Activated CD8-positive, alpha-beta T cell treated with anti-CD3 and anti-CD28 coated beads, Interleukin-2, amount 10 ng/mL, durations not matched to agents 7 days and 5 days (primary cell): ENCODE measurements at regions of chr7 and their contacts with region 1.

Region 1: GRCh38 chr7:101804967-101805366 is 12.5 kb upstream of the CUX1 start:
- DNase-seq: peak; percentile 30
- ATAC-seq: peak; percentile 71
- H3K4me3 Mint-ChIP-seq: no peak overlapping the region
- H3K27ac Mint-ChIP-seq: no peak overlapping the region
- H3K4me1 Mint-ChIP-seq: peaks cover 15% of the 10 kb centered on the region
- H3K27me3 Mint-ChIP-seq: peaks cover 23% of the 10 kb centered on the region

Region 2: GRCh38 chr7:101792051-101792681 is 12.8 kb before region 1 on chr7:
- CTCF ChIA-PET with region 1: no interaction called
- POLR2A ChIA-PET with region 1: no interaction called
- DNase-seq: no peak
- ATAC-seq: no peak
- H3K4me3 Mint-ChIP-seq: no peak overlapping the region
- H3K27ac Mint-ChIP-seq: no peak overlapping the region
- H3K4me1 Mint-ChIP-seq: no peaks in the 10 kb centered on the region
- H3K27me3 Mint-ChIP-seq: no peaks in the 10 kb centered on the region

Region 3: GRCh38 chr7:101814991-101815834 is 10.2 kb after region 1 on chr7:
- CTCF ChIA-PET with region 1: interaction called, 10 read pairs
- POLR2A ChIA-PET with region 1: no interaction called
- DNase-seq: peak; percentile 66
- ATAC-seq: peak; percentile 35
- H3K4me3 Mint-ChIP-seq: peak overlapping the region; percentile 63
- H3K27ac Mint-ChIP-seq: peak overlapping the region; percentile 23
- H3K4me1 Mint-ChIP-seq: peaks cover 20% of the 10 kb centered on the region
- H3K27me3 Mint-ChIP-seq: peaks cover 12% of the 10 kb centered on the region